ENCODE measurements at regions of chr2 and their contacts with region 1.

Region 1: GRCh38 chr2:64767670-64768468 is 114.2 kb upstream of the SERTAD2 start:
- DNase-seq: peak; percentile 76
- ATAC-seq: peak; percentile 81
- H3K4me3 Mint-ChIP-seq: peak overlapping the region; percentile 88
- H3K27ac Mint-ChIP-seq: peak overlapping the region; percentile 96
- H3K4me1 Mint-ChIP-seq: peaks cover 21% of the 10 kb centered on the region
- H3K27me3 Mint-ChIP-seq: no peaks in the 10 kb centered on the region
- CTCF ChIP-seq: no peak

Region 2: DNA sequence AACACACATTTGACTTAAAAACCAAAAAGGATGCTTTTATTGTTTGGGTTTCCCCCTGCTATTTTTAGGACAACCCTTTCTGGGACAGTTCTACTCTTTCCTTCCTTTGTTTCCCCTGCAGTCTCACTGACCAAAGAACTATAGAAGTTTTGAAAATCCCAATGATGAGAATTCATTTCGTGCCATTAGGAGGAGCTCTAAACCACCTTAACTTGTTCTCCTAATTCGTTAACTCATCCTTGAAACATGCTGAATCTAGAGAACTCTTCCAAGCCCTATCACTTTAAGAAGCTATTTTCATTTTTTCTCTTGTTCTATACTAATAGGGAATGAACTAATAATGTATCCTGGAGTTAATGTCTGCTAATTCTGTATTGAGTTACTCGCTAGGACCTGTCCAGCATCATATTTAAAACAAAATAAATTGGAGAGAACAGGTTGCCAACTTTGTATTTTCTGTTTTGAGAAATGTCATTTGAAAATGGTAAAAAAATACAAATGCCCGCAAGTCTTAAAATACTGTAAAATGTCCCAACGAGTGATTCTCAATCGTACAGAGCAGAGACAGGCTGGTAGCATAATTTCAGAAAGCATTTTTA is 180.9 kb before region 1 on chr2:
- CTCF ChIA-PET with region 1: interaction called, 3 read pairs
- POLR2A ChIA-PET with region 1: no interaction called
- intact Hi-C with region 1: loop called (anchors 1 kb)
- DNase-seq: no peak
- ATAC-seq: peak; percentile 62
- H3K4me3 Mint-ChIP-seq: no peak overlapping the region
- H3K27ac Mint-ChIP-seq: peak overlapping the region; percentile 50
- H3K4me1 Mint-ChIP-seq: peaks cover 17% of the 10 kb centered on the region
- H3K27me3 Mint-ChIP-seq: no peaks in the 10 kb centered on the region
- CTCF ChIP-seq: peak; percentile 77

Region 3: GRCh38 chr2:64653349-64654062 is 114.4 kb before region 1 on chr2 and contains the start of gene SERTAD2:
- CTCF ChIA-PET with region 1: interaction called, 4 read pairs
- POLR2A ChIA-PET with region 1: interaction called, 91 read pairs
- intact Hi-C with region 1: loop called (anchors 1 kb)
- DNase-seq: peak; percentile 84
- ATAC-seq: peak; percentile 79
- H3K4me3 Mint-ChIP-seq: peak within 1 kb of the TSS; percentile 91
- H3K27ac Mint-ChIP-seq: peak within 1 kb of the TSS; percentile 93
- H3K4me1 Mint-ChIP-seq: peaks cover 82% of the 10 kb centered on the region
- H3K27me3 Mint-ChIP-seq: no peaks in the 10 kb centered on the region
- CTCF ChIP-seq: no peak
- total RNA-seq, gene SERTAD2: 45.6 and 47.3 TPM in 2 replicates

Region 4: DNA sequence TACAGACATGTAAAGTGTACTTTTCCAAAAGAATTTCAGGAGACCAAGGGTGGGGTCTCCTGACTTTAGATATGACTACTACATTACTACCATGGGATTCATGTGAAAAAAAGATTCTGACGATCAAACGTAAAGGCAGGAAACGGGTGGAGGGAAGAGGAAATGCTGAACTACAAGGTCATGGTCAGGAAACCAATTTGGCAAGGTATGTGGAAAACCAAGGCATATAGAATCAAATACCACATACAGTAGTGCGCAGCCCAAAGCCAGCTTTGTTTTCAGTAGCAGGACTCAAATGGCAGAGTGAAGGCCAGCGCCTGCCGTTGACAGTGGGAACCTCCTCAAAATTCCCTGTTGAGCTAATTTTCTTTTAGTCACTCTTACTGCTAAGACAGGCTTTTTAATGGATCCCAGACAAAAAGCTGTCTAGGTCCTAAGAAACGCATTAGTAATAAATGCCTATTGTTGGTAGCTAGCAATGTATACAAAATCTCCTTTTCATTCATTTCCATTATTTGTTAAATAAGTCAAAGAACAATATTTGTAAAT is 56.5 kb before region 1 on chr2:
- CTCF ChIA-PET with region 1: no interaction called
- POLR2A ChIA-PET with region 1: no interaction called
- intact Hi-C with region 1: no loop called
- DNase-seq: no peak
- ATAC-seq: no peak
- H3K4me3 Mint-ChIP-seq: no peak overlapping the region
- H3K27ac Mint-ChIP-seq: no peak overlapping the region
- H3K4me1 Mint-ChIP-seq: peaks cover 3% of the 10 kb centered on the region
- H3K27me3 Mint-ChIP-seq: no peaks in the 10 kb centered on the region
- CTCF ChIP-seq: no peak

Region 5: DNA sequence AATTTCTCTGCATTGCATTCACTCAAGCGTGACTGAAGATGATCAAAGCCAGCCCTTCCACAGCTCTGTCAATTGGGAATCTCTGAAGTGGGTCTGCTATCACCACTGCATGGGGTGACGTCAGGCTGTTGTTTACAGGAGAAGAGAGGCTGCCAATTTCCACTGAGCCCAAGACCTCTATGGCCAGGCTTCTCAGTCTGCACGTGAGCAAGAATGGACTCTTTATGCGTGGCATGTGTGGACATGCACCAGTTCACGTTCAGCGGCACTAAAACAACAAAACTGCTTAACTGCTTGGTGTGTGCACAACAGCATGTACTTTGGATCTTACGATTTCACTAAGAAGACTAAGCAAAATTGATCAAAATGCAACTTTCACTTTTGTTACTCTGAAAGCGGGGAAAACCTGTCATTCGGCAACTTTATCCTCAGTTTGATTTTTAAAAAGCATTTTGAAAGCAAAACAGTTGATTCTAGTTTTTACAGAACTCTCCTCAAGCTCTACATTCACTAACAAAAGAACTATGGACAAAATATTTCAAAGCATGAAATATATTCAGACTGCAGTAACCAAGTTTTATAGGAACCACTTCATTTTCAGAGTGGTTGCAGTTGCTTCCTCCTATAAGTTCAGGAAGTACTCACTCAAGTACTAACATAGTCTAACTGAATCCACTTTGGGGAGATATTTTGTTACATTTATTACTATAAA is 37.2 kb before region 1 on chr2:
- CTCF ChIA-PET with region 1: no interaction called
- POLR2A ChIA-PET with region 1: interaction called, 25 read pairs
- intact Hi-C with region 1: loop called (anchors 1 kb)
- DNase-seq: peak; percentile 24
- ATAC-seq: peak; percentile 45
- H3K4me3 Mint-ChIP-seq: peak overlapping the region; percentile 84
- H3K27ac Mint-ChIP-seq: peak overlapping the region; percentile 91
- H3K4me1 Mint-ChIP-seq: peaks cover 66% of the 10 kb centered on the region
- H3K27me3 Mint-ChIP-seq: no peaks in the 10 kb centered on the region
- CTCF ChIP-seq: no peak

Region 6: DNA sequence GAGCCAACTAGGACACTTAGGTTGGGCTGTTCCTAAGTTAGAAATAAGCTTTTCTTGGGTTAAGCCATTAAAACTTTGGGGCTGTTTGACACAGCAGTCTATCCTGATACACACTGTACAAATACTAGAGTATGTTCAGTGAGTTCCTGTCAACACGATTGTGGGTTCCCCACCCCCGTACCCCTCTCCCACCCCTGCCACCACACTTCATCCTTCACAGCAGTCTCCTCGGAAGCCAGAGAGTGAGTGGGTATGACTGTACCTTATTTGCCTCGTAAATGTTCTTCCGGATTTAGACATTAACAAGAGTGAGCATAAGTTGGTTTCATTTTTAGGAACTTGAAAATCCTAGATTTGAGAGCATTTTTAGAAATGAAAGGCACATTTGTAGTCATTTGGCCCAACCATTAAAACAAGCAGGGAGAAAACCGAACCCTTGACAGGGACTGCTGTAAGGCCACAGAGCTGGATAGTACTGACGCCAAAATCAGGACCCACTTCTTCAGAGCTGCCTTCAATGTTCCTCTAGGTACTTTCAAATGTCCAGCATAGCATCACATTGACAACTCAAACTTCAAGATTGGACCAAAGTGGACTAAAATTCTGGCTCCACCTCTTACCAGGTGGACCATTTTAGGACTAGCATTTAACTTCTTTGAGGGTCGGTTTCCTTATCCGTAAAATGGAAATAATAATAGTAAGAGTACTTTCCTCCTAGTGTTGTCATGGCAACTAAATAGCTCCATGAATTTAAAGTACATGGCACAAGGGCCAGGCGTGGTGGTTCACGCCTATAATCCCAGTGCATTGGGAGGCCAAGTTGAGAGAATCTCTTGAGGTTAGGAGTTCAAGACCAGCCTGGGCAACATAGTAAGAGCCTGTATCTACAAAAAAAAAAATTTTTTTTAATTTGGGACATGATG is 52.2 kb after region 1 on chr2:
- CTCF ChIA-PET with region 1: no interaction called
- POLR2A ChIA-PET with region 1: interaction called, 25 read pairs
- intact Hi-C with region 1: loop called (anchors 1 kb)
- DNase-seq: no peak
- ATAC-seq: peak; percentile 94
- H3K4me3 Mint-ChIP-seq: peak overlapping the region; percentile 59
- H3K27ac Mint-ChIP-seq: peak overlapping the region; percentile 89
- H3K4me1 Mint-ChIP-seq: peaks cover 50% of the 10 kb centered on the region
- H3K27me3 Mint-ChIP-seq: no peaks in the 10 kb centered on the region
- CTCF ChIP-seq: no peak

Region 7: GRCh38 chr2:64859312-64860212 is 91.7 kb after region 1 on chr2:
- CTCF ChIA-PET with region 1: interaction called, 6 read pairs
- POLR2A ChIA-PET with region 1: interaction called, 70 read pairs
- intact Hi-C with region 1: loop called (anchors 1 kb)
- DNase-seq: peak; percentile 44
- ATAC-seq: peak; percentile 19
- H3K4me3 Mint-ChIP-seq: peak overlapping the region; percentile 76
- H3K27ac Mint-ChIP-seq: peak overlapping the region; percentile 94
- H3K4me1 Mint-ChIP-seq: peaks cover 36% of the 10 kb centered on the region
- H3K27me3 Mint-ChIP-seq: no peaks in the 10 kb centered on the region
- CTCF ChIP-seq: no peak